Activated naive CD4-positive, alpha-beta T cell treated with anti-CD3 and anti-CD28 coated beads, Interleukin-2, amount 10 ng/mL, durations not matched to agents 7 days and 5 days (primary cell): ENCODE measurements at regions of chr11 and their contacts with region 1.

Region 1: GRCh38 chr11:9534791-9535781 is 38.4 kb upstream of the WEE1 start:
- DNase-seq: peak; percentile 84
- H3K4me3 Mint-ChIP-seq: no peak overlapping the region
- H3K27ac Mint-ChIP-seq: no peak overlapping the region
- H3K4me1 Mint-ChIP-seq: peaks cover 3% of the 10 kb centered on the region
- H3K27me3 Mint-ChIP-seq: no peaks in the 10 kb centered on the region

Region 2: GRCh38 chr11:9362393-9362863 is 172.7 kb before region 1 on chr11:
- CTCF ChIA-PET with region 1: no interaction called
- DNase-seq: no peak
- H3K4me3 Mint-ChIP-seq: no peak overlapping the region
- H3K27ac Mint-ChIP-seq: no peak overlapping the region
- H3K4me1 Mint-ChIP-seq: peaks cover 22% of the 10 kb centered on the region
- H3K27me3 Mint-ChIP-seq: no peaks in the 10 kb centered on the region

Region 3: GRCh38 chr11:9479899-9480298 is 55.2 kb before region 1 on chr11:
- CTCF ChIA-PET with region 1: no interaction called
- DNase-seq: no peak
- H3K4me3 Mint-ChIP-seq: no peak overlapping the region
- H3K27ac Mint-ChIP-seq: no peak overlapping the region
- H3K4me1 Mint-ChIP-seq: no peaks in the 10 kb centered on the region
- H3K27me3 Mint-ChIP-seq: no peaks in the 10 kb centered on the region

Region 4: GRCh38 chr11:9506489-9507276 is 28.4 kb before region 1 on chr11:
- CTCF ChIA-PET with region 1: interaction called, 11 read pairs
- DNase-seq: peak; percentile 84
- H3K4me3 Mint-ChIP-seq: no peak overlapping the region
- H3K27ac Mint-ChIP-seq: peak overlapping the region; percentile 52
- H3K4me1 Mint-ChIP-seq: peaks cover 11% of the 10 kb centered on the region
- H3K27me3 Mint-ChIP-seq: no peaks in the 10 kb centered on the region

Region 5: DNA sequence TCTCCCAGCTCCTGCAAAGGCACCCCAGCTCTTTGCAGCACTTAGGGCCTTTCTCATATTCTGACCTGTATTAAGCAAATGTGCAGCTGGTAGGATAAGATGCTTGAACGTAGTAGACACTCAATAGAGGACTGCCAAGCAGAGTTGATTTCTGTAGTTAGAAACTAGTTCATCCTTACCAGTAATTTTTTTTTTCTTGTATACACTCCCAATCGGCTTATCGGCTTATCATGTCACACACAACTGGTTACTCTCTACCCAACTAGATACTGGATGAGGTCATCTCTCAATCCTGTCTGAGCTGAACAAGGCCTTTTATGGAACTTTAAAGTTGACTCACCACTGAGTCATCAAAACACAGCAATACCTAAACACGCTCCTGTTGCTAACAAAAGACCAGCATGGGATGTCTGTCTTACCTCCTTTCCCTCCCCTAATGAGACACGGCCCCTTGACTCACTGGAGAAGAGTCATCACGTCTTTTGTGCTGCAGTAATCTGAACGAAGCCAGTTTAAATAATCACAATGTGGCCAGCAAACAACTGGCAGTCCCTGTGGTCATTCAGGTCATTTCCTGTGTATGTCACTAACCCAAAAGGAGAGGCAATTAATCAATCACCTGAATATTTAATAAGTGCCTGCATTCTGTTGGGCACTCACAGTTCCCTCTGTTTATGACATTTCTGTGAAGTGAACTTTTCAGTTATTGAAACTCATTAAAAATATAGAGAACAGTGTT is 30.9 kb after region 1 on chr11:
- CTCF ChIA-PET with region 1: interaction called, 13 read pairs
- DNase-seq: peak; percentile 40
- H3K4me3 Mint-ChIP-seq: no peak overlapping the region
- H3K27ac Mint-ChIP-seq: no peak overlapping the region
- H3K4me1 Mint-ChIP-seq: peaks cover 17% of the 10 kb centered on the region
- H3K27me3 Mint-ChIP-seq: peaks cover 31% of the 10 kb centered on the region

Region 6: GRCh38 chr11:9601037-9601875 is 66.2 kb after region 1 on chr11:
- CTCF ChIA-PET with region 1: interaction called, 10 read pairs
- DNase-seq: peak; percentile 82
- H3K4me3 Mint-ChIP-seq: peak overlapping the region; percentile 69
- H3K27ac Mint-ChIP-seq: peak overlapping the region; percentile 88
- H3K4me1 Mint-ChIP-seq: peaks cover 29% of the 10 kb centered on the region
- H3K27me3 Mint-ChIP-seq: peaks cover 15% of the 10 kb centered on the region

Region 7: DNA sequence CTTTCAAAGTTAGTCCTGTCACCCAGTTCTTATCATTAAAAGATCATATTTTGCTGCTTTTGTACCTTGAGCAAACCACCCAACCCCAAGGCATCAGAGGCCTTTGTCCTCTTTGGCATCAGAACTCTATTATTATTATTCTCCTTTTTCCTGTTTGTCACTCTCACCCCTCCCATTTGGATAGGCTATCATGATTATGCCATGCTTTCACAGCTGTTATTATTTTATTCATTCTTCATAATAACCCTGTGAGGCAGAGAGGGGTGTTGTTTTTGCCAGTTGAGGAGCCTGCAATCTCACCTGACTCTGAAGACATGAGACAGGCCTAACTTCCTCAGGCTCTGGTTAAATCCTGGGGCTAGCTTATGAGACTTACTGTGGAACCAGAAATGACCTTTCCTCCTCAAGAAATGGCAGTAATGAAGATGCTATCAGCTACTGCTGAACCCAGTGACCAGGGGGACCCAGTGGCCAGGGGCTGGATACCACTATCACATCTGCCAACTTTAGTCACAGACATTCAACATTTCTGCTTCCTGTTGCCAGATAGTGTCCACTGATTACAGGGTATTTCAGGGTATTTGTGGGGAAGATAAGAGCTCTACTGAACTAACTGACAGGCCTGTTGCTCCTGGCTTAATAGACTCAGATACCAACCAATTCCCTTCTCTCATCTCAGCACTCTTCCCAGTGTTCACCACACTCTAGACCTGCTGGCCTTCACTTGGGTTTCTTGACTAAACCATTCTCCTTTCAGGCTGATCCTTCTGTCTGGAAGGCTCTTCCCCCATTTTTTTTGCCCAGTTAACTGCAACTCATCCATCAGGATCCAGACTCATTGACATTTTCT is 117.0 kb after region 1 on chr11:
- CTCF ChIA-PET with region 1: no interaction called
- DNase-seq: no peak
- H3K4me3 Mint-ChIP-seq: no peak overlapping the region
- H3K27ac Mint-ChIP-seq: no peak overlapping the region
- H3K4me1 Mint-ChIP-seq: no peaks in the 10 kb centered on the region
- H3K27me3 Mint-ChIP-seq: peaks cover 10% of the 10 kb centered on the region

Region 8: DNA sequence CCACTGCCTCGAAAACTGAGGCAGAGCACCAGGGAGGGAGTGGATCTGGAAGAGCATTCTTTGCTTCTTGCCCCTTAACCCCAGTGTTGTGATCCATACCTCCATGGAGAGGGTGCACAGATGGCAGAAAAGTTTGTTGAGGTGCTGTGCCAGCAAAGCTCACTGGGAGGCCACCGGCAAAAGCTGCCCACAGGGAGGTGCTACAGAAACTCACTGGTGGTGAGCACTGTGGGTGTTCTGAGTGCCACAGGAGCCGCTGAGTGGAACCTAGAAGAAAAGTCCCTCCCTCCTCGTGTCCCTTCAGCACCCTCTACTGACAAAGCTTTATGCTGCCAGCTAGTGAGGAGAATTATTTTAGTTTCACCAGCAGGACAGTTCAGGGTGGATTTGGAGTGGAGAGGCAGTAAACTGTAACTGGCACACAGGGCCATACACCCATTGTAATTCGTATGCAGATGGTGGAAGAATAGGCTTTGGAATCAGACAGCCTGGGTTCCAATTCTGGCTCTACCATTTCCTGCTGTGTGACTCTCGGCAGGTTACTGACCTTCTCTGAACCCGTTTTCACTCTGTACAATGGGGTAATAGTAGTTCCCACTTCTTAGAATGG is 213.4 kb after region 1 on chr11:
- CTCF ChIA-PET with region 1: interaction called, 106 read pairs
- DNase-seq: peak; percentile 80
- H3K4me3 Mint-ChIP-seq: no peak overlapping the region
- H3K27ac Mint-ChIP-seq: no peak overlapping the region
- H3K4me1 Mint-ChIP-seq: peaks cover 18% of the 10 kb centered on the region
- H3K27me3 Mint-ChIP-seq: peaks cover 4% of the 10 kb centered on the region